ENCODE measurements at regions of chr12 and their contacts with region 1.

Region 1: GRCh38 chr12:124480469-124481256 is 86.7 kb downstream of the NCOR2 start:
- DNase-seq: peak; percentile 91 to 98
- H3K4me3 ChIP-seq: no peak overlapping the region; the same call in 1 of the 2 replicates
- H3K27ac ChIP-seq: peak overlapping the region; percentile 59
- H3K4me1 ChIP-seq: peaks cover 28% of the 10 kb centered on the region
- H3K27me3 ChIP-seq: no peaks in the 10 kb centered on the region
- CTCF ChIP-seq: no peak

Region 2: DNA sequence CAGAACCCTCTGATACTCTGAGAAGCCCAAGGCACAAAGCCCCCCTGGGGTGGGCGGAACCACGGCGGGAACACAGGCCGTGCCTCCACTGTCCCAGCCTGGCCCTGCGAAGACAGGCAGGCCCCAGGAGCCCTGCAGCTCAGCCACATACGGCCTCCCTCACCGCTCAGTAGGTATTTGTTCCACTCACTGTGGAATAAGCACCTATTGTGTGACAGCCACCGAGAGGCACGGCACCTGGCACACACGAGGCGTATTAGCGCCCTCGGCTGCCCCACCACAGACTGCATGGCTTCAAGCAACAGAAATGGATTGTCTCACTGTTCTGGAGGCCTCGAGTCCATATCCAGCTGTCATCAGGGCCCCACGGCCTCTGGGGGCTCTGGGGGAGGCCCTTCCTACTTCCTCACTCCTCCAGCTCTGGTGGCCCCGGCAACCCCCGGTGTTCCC is 20.5 kb after region 1 on chr12:
- CTCF ChIA-PET with region 1: no interaction called
- POLR2A ChIA-PET with region 1: interaction called, 13 read pairs
- intact Hi-C with region 1: loop called (anchors 1 kb)
- DNase-seq: no peak
- H3K4me3 ChIP-seq: no peak overlapping the region
- H3K27ac ChIP-seq: no peak overlapping the region
- H3K4me1 ChIP-seq: no peaks in the 10 kb centered on the region
- H3K27me3 ChIP-seq: no peaks in the 10 kb centered on the region
- CTCF ChIP-seq: no peak

Region 3: DNA sequence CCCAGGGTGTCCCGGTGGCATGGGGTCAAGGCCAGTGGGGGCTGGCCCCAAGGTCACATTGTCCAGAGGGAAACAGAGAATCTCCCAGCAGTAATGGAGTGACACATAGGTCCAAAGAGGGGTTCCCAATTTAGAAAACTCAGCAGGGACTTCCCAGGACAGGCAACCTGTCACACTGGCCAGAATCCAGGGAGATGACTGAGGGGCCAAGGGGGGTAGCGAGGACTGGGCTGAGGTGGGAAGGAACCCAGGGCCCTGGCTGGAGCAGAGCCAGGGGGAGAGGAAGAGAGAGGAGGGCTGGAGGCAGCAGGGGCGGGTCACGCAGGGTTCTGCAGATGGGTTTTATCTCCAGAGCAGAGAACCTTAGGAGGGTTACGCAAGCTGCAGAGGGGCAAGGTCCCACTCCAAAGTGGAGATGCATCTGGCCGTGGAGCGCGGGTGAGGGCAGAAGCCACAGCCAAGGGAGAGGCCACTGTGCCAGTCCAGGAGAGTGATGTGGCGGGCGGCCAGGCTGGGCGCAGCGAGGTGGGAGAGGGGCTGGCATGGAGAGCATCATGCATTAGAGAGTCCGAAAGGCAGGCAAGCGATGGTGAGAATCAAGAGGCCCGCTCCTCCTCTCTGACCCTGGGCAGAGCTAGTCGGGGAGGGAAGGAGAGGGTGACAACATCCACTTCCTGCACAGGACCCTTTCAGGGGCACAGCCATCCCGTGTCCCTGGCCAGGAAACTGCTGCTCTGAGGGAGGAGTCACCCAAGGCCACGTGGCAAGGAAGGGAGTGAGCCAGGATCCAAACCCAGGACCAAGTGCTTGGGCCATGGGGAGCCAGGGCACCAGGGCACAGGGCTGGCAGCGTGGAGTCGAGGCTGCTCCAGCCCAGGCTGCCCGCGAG is 57.8 kb after region 1 on chr12:
- CTCF ChIA-PET with region 1: interaction called, 11 read pairs
- POLR2A ChIA-PET with region 1: no interaction called
- intact Hi-C with region 1: no loop called
- DNase-seq: no peak
- H3K4me3 ChIP-seq: no peak overlapping the region
- H3K27ac ChIP-seq: no peak overlapping the region
- H3K4me1 ChIP-seq: peaks cover 41% of the 10 kb centered on the region
- H3K27me3 ChIP-seq: no peaks in the 10 kb centered on the region
- CTCF ChIP-seq: no peak

Measured in PC-9 (cell line).